ENCODE measurements at regions of chr17 and their contacts with region 1.

Region 1: GRCh38 chr17:64306850-64307463 is 43.9 kb upstream of the TEX2 start:
- DNase-seq: peak; percentile 83
- ATAC-seq: peak; percentile 57
- H3K4me3 ChIP-seq: no peak overlapping the region
- H3K4me3 Mint-ChIP-seq: no peak overlapping the region
- H3K27ac ChIP-seq: no peak overlapping the region
- H3K27ac Mint-ChIP-seq: no peak overlapping the region
- H3K4me1 ChIP-seq: no peaks in the 10 kb centered on the region
- H3K4me1 Mint-ChIP-seq: no peaks in the 10 kb centered on the region
- H3K27me3 ChIP-seq: no peaks in the 10 kb centered on the region
- H3K27me3 Mint-ChIP-seq: no peaks in the 10 kb centered on the region
- CTCF ChIP-seq: peak; percentile 95

Region 2: DNA sequence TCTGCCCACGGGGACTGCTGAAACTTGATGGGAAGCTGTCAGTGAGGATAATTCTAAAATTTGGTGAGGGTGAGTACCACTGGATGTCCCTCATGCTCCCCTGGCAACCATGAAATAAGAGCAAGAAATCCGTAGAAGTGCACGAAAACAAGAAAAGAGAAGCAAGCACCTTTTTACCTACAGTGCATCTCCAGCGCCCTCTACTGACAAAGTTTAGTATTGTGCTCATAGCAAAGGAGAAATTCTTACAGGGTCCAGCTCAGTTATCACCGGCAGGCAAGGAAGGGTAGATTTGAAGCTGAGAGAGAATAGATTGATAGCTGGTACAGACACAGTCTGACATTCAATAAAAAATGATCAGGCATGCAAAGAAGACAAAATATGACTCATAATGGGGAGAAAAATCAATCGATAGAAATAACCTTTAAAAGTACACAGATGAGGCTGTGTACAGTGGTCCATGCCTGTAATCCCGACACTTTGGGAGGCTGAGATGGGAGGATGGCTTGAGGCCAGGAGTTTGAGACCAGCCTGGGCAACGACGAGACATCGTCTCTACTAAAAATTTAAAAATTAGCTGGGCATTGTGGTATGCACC is 15.6 kb before region 1 on chr17:
- CTCF ChIA-PET with region 1: interaction called, 11 read pairs
- POLR2A ChIA-PET with region 1: no interaction called
- intact Hi-C with region 1: no loop called
- DNase-seq: no peak
- ATAC-seq: no peak
- H3K4me3 ChIP-seq: no peak overlapping the region
- H3K4me3 Mint-ChIP-seq: no peak overlapping the region
- H3K27ac ChIP-seq: no peak overlapping the region
- H3K27ac Mint-ChIP-seq: no peak overlapping the region
- H3K4me1 ChIP-seq: no peaks in the 10 kb centered on the region
- H3K4me1 Mint-ChIP-seq: no peaks in the 10 kb centered on the region
- H3K27me3 ChIP-seq: no peaks in the 10 kb centered on the region
- H3K27me3 Mint-ChIP-seq: no peaks in the 10 kb centered on the region
- CTCF ChIP-seq: peak; percentile 52

Region 3: DNA sequence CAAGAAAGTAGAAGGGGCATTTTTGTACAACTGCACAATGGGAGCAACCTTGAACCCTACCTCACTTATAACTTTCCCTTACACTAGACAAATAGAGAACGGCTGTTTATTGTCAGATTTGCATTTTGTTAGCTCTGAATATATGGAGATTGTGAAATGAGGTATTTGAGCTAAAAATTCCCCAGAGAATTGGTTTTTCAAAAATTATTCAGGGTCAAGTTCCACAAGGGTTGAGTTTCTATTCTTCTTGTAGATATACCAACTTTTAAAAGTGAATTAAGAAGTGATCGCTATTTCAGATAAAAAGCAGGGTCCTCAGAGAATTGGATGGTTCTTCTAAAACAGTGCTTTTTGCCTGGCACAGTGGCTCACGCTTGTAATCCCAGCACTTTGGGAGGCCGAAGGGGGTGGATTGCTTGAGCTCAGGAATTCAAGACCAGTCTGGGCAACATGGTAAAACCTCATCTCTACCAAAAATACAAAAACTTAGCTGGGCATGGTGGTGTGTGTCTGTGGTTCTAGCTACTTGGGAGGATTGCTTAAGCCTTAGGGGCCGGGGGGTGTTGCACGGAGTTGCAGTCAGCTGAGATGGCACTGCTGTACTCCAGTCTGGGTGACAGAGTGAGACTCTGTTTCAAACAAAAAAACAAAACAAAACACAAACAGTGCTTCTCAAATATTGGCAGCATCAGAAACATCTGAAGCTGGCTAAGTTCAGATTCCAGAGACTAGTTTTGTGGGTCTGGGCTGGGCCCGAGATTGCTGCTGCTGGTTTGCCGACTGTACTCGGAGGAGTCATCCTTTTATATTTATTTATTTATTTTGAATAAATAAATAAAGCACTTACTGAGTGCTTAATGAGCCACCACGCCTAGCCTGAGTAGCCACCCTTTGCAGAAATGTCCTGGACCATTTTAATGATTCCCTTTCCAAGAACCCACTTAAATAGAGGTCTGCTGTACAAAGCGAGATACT is 32.8 kb after region 1 on chr17:
- CTCF ChIA-PET with region 1: no interaction called
- POLR2A ChIA-PET with region 1: no interaction called
- intact Hi-C with region 1: no loop called
- DNase-seq: no peak
- ATAC-seq: no peak
- H3K4me3 ChIP-seq: no peak overlapping the region
- H3K4me3 Mint-ChIP-seq: no peak overlapping the region
- H3K27ac ChIP-seq: no peak overlapping the region
- H3K27ac Mint-ChIP-seq: no peak overlapping the region
- H3K4me1 ChIP-seq: peaks cover 4 to 11% of the 10 kb centered on the region in 2 donors
- H3K4me1 Mint-ChIP-seq: peaks cover 12% of the 10 kb centered on the region
- H3K27me3 ChIP-seq: no peaks in the 10 kb centered on the region
- H3K27me3 Mint-ChIP-seq: no peaks in the 10 kb centered on the region
- CTCF ChIP-seq: no peak